ENCODE measurements at regions of chr7 and their contacts with region 1.

Region 1: DNA sequence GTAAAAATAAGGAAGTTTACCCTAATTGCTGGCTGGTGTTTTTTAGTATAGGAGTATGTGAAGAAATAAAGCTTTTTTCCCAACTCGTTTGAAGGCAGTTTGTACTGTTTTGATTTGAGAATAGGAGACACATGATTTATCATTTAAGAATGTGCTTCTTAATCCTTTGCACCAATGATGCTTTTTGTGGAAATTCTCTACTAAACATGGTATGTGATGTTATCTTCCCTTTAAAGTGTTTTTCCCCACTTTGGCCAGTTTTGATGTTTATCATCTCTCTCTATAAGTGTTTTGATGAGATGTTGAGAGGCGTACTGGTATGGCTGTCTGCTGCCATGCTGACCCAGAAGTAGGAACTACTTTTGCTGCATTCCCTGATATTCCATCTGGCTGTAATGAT is 85.1 kb downstream of the SUGCT start:
- DNase-seq: peak; percentile 36
- ATAC-seq: no peak
- H3K4me3 ChIP-seq: no peak overlapping the region
- H3K27ac ChIP-seq: no peak overlapping the region
- H3K4me1 ChIP-seq: peaks cover 21% of the 10 kb centered on the region; the same call in 1 of the 2 replicates
- H3K27me3 ChIP-seq: no peaks in the 10 kb centered on the region
- CTCF ChIP-seq: no peak

Region 2: DNA sequence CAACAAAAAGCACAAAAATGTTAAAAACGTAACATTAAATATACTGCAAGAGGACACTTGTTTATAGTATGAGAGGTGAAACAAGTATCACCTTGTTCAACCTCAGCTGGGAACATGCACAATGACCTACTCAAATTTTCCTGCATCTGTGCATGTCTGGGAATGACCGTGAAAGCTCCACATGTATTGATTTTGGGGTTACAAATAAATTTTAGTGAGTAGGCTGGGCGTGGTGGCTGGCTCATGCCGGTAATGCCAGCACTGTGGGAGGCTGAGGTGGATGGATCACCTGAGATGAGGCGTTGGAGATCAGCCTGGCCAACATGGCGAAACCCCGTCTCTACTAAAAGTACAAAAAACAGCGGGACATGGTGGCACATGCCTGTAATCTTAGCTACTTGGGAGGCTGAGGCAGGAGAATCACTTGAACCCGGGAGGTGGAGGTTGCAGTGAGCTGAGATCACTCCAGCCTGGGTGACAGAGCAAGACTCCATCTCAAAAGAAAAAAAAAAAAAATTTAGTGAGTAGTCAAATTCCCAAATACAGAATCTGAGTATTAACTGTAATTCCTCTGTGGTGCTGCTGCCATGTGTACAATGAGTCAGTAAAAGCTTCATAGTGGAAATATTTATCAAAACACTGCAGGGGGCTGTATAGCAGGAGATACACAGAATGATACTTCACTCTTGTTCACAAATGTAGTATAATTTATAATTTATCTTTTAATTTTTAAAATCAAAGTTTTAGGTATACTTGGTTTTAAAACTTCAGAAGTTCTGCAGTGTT is 44.0 kb before region 1 on chr7:
- CTCF ChIA-PET with region 1: no interaction called
- POLR2A ChIA-PET with region 1: interaction called, 10 read pairs
- intact Hi-C with region 1: no loop called
- DNase-seq: peak; percentile 10
- ATAC-seq: peak; percentile 77
- H3K4me3 ChIP-seq: no peak overlapping the region
- H3K27ac ChIP-seq: no peak overlapping the region
- H3K4me1 ChIP-seq: no peaks in the 10 kb centered on the region
- H3K27me3 ChIP-seq: no peaks in the 10 kb centered on the region
- CTCF ChIP-seq: no peak

Region 3: GRCh38 chr7:40777748-40778312 is 557.9 kb after region 1 on chr7:
- CTCF ChIA-PET with region 1: no interaction called
- POLR2A ChIA-PET with region 1: no interaction called
- intact Hi-C with region 1: no loop called
- DNase-seq: no peak
- ATAC-seq: no peak
- H3K4me3 ChIP-seq: no peak overlapping the region
- H3K27ac ChIP-seq: no peak overlapping the region
- H3K4me1 ChIP-seq: no peaks in the 10 kb centered on the region
- H3K27me3 ChIP-seq: no peaks in the 10 kb centered on the region
- CTCF ChIP-seq: no peak